Caco-2 (cell line): ENCODE measurements at regions of chr20 and their contacts with region 1.

Region 1: GRCh38 chr20:19026121-19026878 is 186.1 kb upstream of the SLC24A3 start:
- DNase-seq: no peak
- H3K4me3 ChIP-seq: no peak overlapping the region
- H3K4me3 Mint-ChIP-seq: no peak overlapping the region
- H3K27ac Mint-ChIP-seq: no peak overlapping the region
- H3K4me1 ChIP-seq: no peaks in the 10 kb centered on the region
- H3K4me1 Mint-ChIP-seq: no peaks in the 10 kb centered on the region
- H3K27me3 ChIP-seq: no peaks in the 10 kb centered on the region
- H3K27me3 Mint-ChIP-seq: peaks cover 3% of the 10 kb centered on the region
- CTCF ChIP-seq: no peak

Region 2: DNA sequence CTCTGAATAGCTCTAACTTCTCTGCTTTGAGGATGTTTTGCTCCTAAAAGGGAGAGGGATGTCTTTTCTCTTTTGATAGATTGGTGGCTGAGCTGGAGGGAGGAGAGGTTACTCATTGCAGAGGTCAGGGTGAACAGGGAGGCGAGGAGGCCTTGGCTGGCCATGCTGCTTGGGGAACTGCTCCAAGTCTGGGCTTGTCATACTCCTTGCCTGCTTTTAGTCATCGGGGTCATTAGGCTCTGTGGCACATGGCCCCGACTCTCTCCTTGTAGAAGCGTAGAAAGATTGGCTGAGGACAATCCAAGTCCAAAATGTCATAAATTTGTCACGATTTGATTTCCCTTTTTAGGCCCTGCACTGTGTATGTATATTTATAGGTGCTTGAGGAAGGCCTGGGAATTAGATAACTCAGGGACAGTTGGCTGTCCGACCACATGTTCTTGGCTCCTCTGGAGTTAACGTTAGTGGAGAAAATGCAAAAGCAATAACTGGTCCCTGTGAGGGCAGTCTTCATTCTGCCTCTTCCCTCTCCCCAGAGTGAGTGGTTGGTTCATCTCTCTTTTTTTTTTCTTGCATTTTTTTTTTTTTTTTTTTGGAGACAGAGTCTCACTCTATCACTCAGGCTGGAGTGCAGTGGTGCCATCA is 52.6 kb before region 1 on chr20:
- CTCF ChIA-PET with region 1: no interaction called
- POLR2A ChIA-PET with region 1: no interaction called
- intact Hi-C with region 1: loop called (anchors 10 kb)
- DNase-seq: no peak
- H3K4me3 ChIP-seq: no peak overlapping the region
- H3K4me3 Mint-ChIP-seq: no peak overlapping the region
- H3K27ac Mint-ChIP-seq: no peak overlapping the region
- H3K4me1 ChIP-seq: no peaks in the 10 kb centered on the region
- H3K4me1 Mint-ChIP-seq: no peaks in the 10 kb centered on the region
- H3K27me3 ChIP-seq: peaks cover 1% of the 10 kb centered on the region; the same call in 1 of the 2 replicates
- H3K27me3 Mint-ChIP-seq: peaks cover 13% of the 10 kb centered on the region
- CTCF ChIP-seq: no peak